Right ventricle myocardium inferior (tissue), 1 donor: ENCODE measurements at regions of chr2 and their contacts with region 1.

Region 1: GRCh38 chr2:31170071-31170698 is 31.9 kb upstream of the GALNT14 start:
- DNase-seq: peak; percentile 79
- ATAC-seq: peak; percentile 77

Region 2: GRCh38 chr2:30862054-30862651 is 308.0 kb before region 1 on chr2:
- intact Hi-C with region 1: loop called (anchors 2 kb)
- DNase-seq: no peak
- ATAC-seq: no peak

Region 3: GRCh38 chr2:30956995-30957394 is 213.2 kb before region 1 on chr2:
- intact Hi-C with region 1: no loop called
- DNase-seq: no peak
- ATAC-seq: no peak

Region 4: DNA sequence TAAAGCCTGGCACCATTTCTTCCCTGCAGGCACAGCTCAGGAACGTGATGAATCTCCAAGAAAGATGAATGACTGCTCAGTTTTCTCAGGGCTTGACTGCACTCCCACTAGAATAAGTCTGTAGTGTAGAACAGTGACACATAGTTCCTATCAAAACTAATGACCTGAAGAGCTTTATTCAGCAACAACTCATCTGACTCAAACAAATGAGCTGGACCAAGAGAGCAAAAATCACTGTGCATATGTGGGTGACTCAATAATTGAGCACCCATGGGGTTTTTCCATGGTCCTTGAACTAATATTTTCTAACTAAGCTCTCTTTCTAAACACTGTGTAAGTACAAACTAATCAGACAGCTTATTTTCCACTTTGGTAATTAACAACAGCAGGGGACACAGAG is 305.5 kb after region 1 on chr2:
- intact Hi-C with region 1: no loop called
- DNase-seq: no peak
- ATAC-seq: no peak